ENCODE measurements at regions of chr2 and their contacts with region 1.

Region 1: DNA sequence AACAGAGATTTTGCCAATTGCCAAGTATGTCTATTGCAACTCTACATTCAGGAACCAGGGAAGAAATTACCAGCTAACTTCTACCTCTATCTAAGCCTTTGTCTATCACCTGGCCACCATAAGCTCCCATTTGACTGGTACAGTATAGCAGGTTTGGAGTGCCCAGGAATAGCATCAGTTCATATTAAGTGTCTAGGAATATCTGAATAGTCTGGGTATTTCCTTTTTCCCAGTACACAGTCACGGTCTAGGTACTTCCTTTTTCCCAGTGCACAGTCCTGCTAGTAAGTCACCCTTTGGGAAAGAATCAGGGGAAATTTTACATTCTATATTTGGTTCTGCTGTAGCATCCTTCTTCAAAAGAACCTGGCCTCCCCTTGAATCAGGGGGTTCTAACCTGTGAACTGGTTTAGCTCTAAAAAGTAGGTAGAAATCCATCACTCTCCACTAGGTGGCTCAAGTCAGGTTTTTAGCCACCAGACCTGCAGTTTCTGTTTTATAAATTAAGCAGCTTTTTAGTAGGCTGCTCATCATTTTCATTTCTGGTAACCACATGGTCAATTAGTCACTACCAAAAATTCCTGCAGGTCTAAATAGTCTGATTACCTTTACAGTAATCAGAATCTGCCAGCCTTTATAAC is 49.3 kb upstream of the DNAJC10 start:
- DNase-seq: peak; percentile 19
- H3K4me3 Mint-ChIP-seq: no peak overlapping the region
- H3K27ac Mint-ChIP-seq: no peak overlapping the region
- H3K4me1 Mint-ChIP-seq: peaks cover 8% of the 10 kb centered on the region
- H3K27me3 Mint-ChIP-seq: no peaks in the 10 kb centered on the region

Region 2: GRCh38 chr2:182866461-182867406 is 199.9 kb after region 1 on chr2 and contains the start of gene FRZB:
- CTCF ChIA-PET with region 1: no interaction called
- intact Hi-C with region 1: loop called (anchors 5 kb)
- DNase-seq: no peak
- H3K4me3 Mint-ChIP-seq: peak within 1 kb of the TSS; percentile 22
- H3K27ac Mint-ChIP-seq: no peak within 1 kb of the TSS
- H3K4me1 Mint-ChIP-seq: peaks cover 18% of the 10 kb centered on the region
- H3K27me3 Mint-ChIP-seq: peaks cover 70% of the 10 kb centered on the region
- total RNA-seq, gene FRZB: not detected

Measured in activated naive CD4-positive, alpha-beta T cell treated with anti-CD3 and anti-CD28 coated beads for 36 hours (primary cell).